Natural killer cell (primary cell): ENCODE measurements at regions of chr2 and their contacts with region 1.

Region 1: GRCh38 chr2:218659258-218659987 is at the starts of genes BCS1L and ZNF142:
- DNase-seq: peak; percentile 74 to 93
- ATAC-seq: peak; percentile 93 to 97 (median 95)
- H3K4me3 ChIP-seq: peak within 1 kb of the TSS; percentile 97
- H3K4me3 Mint-ChIP-seq: peak within 1 kb of the TSS; percentile 99
- H3K27ac ChIP-seq: peak within 1 kb of the TSS; percentile 68
- H3K27ac Mint-ChIP-seq: peak within 1 kb of the TSS; percentile 83 to 93
- H3K4me1 ChIP-seq: peaks cover 17% of the 10 kb centered on the region
- H3K4me1 Mint-ChIP-seq: peaks cover 27 to 42% of the 10 kb centered on the region in 2 donors
- H3K27me3 ChIP-seq: no peaks in the 10 kb centered on the region
- H3K27me3 Mint-ChIP-seq: no peaks in the 10 kb centered on the region
- CTCF ChIP-seq: no peak
- total RNA-seq, gene BCS1L: 20.1 to 30.9 (median 20.5) TPM
- total RNA-seq, gene ZNF142: 57.0 to 67.8 (median 62.6) TPM

Region 2: DNA sequence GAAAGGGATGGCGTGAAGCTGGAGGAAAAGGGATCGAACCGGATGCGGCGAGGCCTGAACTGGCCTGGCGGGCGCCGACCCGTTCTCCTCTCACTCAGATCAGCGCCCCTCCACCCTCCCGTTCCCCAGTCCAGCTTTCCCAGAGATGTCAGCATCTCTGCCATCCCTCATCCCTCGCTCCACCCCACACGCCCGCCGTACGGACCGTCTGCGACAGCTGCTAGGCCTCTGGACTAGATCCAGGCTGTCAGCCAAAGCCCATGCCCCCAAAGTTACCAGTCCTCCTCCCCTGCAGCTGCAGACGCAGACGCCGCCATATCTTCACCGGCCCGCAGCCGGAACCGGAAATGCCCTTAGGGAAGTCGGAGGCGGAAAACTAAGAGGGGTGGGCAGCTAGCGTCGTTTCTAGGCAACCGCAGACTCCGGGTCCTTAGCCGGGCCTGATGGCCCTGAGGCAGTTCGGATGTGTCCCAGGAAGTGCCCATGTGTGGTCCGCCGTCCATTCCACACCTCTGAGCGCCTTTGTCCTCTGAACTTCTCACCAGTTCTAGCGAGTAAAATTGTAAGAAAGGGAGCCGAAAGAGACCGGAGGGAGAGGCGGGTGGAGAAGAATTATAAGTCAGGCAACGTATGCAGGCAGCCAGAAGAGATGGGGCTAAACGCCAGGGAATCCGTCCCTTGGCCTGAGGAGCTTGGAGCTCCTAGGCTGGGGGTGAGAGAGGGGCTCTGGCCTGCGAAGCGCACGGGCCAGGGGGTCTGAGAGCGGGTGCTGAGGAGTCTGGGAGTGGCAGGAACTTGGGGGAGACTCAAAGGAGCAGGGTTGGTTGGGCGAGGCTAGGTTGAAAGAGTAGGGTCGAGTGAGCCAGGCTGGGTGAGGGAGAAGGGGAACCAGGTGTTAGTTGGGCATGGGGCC is 12.5 kb after region 1 on chr2 and contains the starts of genes RNF25 and STK36:
- intact Hi-C with region 1: loop called (anchors 1 kb)
- DNase-seq: peak; percentile 69 to 90
- ATAC-seq: peak; percentile 93 to 96 (median 93)
- H3K4me3 ChIP-seq: peak within 1 kb of the TSS; percentile 75
- H3K4me3 Mint-ChIP-seq: peak within 1 kb of the TSS; percentile 92
- H3K27ac ChIP-seq: peak within 1 kb of the TSS; percentile 37
- H3K27ac Mint-ChIP-seq: peak within 1 kb of the TSS; percentile 91 to 92
- H3K4me1 ChIP-seq: peaks cover 17% of the 10 kb centered on the region
- H3K4me1 Mint-ChIP-seq: peaks cover 16 to 22% of the 10 kb centered on the region in 2 donors
- H3K27me3 ChIP-seq: no peaks in the 10 kb centered on the region
- H3K27me3 Mint-ChIP-seq: no peaks in the 10 kb centered on the region
- CTCF ChIP-seq: no peak
- total RNA-seq, gene RNF25: 16.5 to 22.8 (median 20.1) TPM
- total RNA-seq, gene STK36: 20.0 to 20.3 (median 20.2) TPM

Region 3: GRCh38 chr2:218710687-218711549 is 51.5 kb after region 1 on chr2 and contains the start of gene TTLL4:
- intact Hi-C with region 1: loop called (anchors 5 kb)
- DNase-seq: peak; percentile 98 to 99
- ATAC-seq: peak; percentile 98 to 100 (median 98)
- H3K4me3 ChIP-seq: peak within 1 kb of the TSS; percentile 76
- H3K4me3 Mint-ChIP-seq: peak within 1 kb of the TSS; percentile 99
- H3K27ac ChIP-seq: peak within 1 kb of the TSS; percentile 78
- H3K27ac Mint-ChIP-seq: peak within 1 kb of the TSS; percentile 94 to 97
- H3K4me1 ChIP-seq: peaks cover 10% of the 10 kb centered on the region
- H3K4me1 Mint-ChIP-seq: peaks cover 12 to 27% of the 10 kb centered on the region in 2 donors
- H3K27me3 ChIP-seq: no peaks in the 10 kb centered on the region
- H3K27me3 Mint-ChIP-seq: no peaks in the 10 kb centered on the region
- CTCF ChIP-seq: peak; percentile 89
- total RNA-seq, gene TTLL4: 20.2 to 25.5 (median 22.8) TPM

Region 4: GRCh38 chr2:219388127-219388844 is 728.9 kb after region 1 on chr2:
- intact Hi-C with region 1: loop called (anchors 5 kb)
- DNase-seq: peak; percentile 98 to 99
- ATAC-seq: peak; percentile 79 to 90 (median 80)
- H3K4me3 ChIP-seq: peak overlapping the region; percentile 12
- H3K4me3 Mint-ChIP-seq: peak overlapping the region; percentile 63
- H3K27ac ChIP-seq: peak overlapping the region; percentile 71
- H3K27ac Mint-ChIP-seq: peak overlapping the region; percentile 92 to 98
- H3K4me1 ChIP-seq: peaks cover 18% of the 10 kb centered on the region
- H3K4me1 Mint-ChIP-seq: peaks cover 4 to 21% of the 10 kb centered on the region in 2 donors
- H3K27me3 ChIP-seq: no peaks in the 10 kb centered on the region
- H3K27me3 Mint-ChIP-seq: peaks cover 0 to 4% of the 10 kb centered on the region in 2 donors
- CTCF ChIP-seq: peak; percentile 61